Activated CD4-positive, alpha-beta T cell treated with anti-CD3 and anti-CD28 coated beads, Interleukin-2, amount 10 ng/mL, durations not matched to agents 24 days and 14 days (primary cell): ENCODE measurements at regions of chr9 and their contacts with region 1.

Region 1: GRCh38 chr9:112218908-112219307 is 43.8 kb upstream of the SUSD1 start:
- DNase-seq: peak; percentile 80
- H3K4me3 Mint-ChIP-seq: peak overlapping the region; percentile 69
- H3K27ac Mint-ChIP-seq: peak overlapping the region; percentile 89
- H3K4me1 Mint-ChIP-seq: peaks cover 25% of the 10 kb centered on the region
- H3K27me3 Mint-ChIP-seq: no peaks in the 10 kb centered on the region

Region 2: DNA sequence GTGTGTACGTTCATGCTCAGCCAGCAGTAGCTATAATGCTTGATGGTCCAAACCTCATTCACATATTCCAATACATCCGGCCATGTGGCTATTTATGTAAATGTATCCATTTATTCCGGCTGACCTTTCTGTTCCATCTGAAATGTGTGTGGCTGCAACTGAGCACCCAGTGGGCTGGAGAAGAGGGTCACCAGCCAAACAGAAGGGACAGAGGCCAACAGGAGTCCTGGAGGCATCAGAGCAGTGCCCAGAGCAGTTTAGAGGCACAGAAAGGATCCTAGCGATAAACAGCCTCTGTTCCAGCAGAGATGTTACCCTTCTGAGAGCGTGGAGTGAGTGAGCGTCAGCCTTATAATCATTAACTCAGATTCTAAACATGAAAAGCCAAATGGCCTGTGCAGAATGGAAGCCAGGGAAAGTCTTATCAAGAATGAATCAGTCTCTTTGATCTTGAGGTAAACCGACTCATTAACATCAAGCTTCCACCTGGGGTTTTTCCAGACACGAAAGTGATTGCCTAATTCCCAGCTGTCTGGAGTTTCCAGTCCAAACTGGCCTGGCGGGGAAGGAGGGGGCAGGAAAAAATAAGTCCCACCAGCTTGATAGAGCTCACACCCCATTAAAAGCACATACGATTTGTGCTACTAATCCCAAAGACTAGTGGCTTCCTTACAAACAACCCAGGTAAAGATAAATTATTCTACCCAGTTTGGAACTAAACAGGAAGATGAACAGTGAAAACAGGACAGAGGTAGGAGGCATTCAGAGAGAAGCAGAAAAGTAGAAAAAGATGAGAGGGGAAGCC is 99.5 kb before region 1 on chr9:
- intact Hi-C with region 1: loop called (anchors 10 kb)
- DNase-seq: no peak
- H3K4me3 Mint-ChIP-seq: no peak overlapping the region
- H3K27ac Mint-ChIP-seq: peak overlapping the region; percentile 16
- H3K4me1 Mint-ChIP-seq: peaks cover 10% of the 10 kb centered on the region
- H3K27me3 Mint-ChIP-seq: no peaks in the 10 kb centered on the region

Region 3: GRCh38 chr9:112180387-112180881 is 38.5 kb before region 1 on chr9:
- intact Hi-C with region 1: loop called (anchors 2 kb)
- DNase-seq: peak; percentile 88
- H3K4me3 Mint-ChIP-seq: peak overlapping the region; percentile 72
- H3K27ac Mint-ChIP-seq: peak overlapping the region; percentile 88
- H3K4me1 Mint-ChIP-seq: peaks cover 54% of the 10 kb centered on the region
- H3K27me3 Mint-ChIP-seq: peaks cover 9% of the 10 kb centered on the region

Region 4: DNA sequence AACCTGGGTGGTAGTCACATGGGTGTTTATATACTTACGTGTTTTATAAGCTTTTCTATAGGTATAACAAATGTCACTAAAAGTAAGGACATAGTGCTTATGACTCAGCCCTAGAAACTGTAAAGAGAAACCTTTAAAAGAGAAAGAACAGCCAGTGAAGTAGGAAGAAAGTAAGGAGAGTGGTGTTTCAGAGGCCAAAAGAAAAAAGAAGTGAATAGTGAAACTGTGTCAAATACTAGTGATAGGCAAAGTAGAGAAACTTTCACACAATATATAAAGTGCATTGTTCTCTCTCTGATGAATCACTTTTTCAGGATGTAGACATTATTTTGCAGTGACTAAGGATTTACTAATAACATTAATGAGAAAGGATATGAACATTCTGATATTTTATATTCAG is 30.4 kb after region 1 on chr9:
- intact Hi-C with region 1: loop called (anchors 2 kb)
- DNase-seq: no peak
- H3K4me3 Mint-ChIP-seq: no peak overlapping the region
- H3K27ac Mint-ChIP-seq: peak overlapping the region; percentile 3
- H3K4me1 Mint-ChIP-seq: peaks cover 21% of the 10 kb centered on the region
- H3K27me3 Mint-ChIP-seq: no peaks in the 10 kb centered on the region

Region 5: GRCh38 chr9:112315331-112316257 is 96.7 kb after region 1 on chr9:
- intact Hi-C with region 1: loop called (anchors 2 kb)
- DNase-seq: no peak
- H3K4me3 Mint-ChIP-seq: peak overlapping the region; percentile 49
- H3K27ac Mint-ChIP-seq: peak overlapping the region; percentile 78
- H3K4me1 Mint-ChIP-seq: peaks cover 46% of the 10 kb centered on the region
- H3K27me3 Mint-ChIP-seq: no peaks in the 10 kb centered on the region

Region 6: GRCh38 chr9:112401175-112401815 is 182.4 kb after region 1 on chr9:
- intact Hi-C with region 1: no loop called
- DNase-seq: no peak
- H3K4me3 Mint-ChIP-seq: no peak overlapping the region
- H3K27ac Mint-ChIP-seq: no peak overlapping the region
- H3K4me1 Mint-ChIP-seq: no peaks in the 10 kb centered on the region
- H3K27me3 Mint-ChIP-seq: no peaks in the 10 kb centered on the region